SK-N-SH (cell line): ENCODE measurements at regions of chr7 and their contacts with region 1.

Region 1: GRCh38 chr7:101743241-101743994 is 74.0 kb upstream of the CUX1 start:
- DNase-seq: peak; percentile 94
- H3K4me3 ChIP-seq: peak overlapping the region; percentile 54 to 90
- H3K27ac ChIP-seq: no peak overlapping the region
- H3K4me1 ChIP-seq: no peaks in the 10 kb centered on the region; a peak in 1 of 4 replicates
- H3K27me3 ChIP-seq: no peaks in the 10 kb centered on the region; the same call in 1 of the 2 replicates
- CTCF ChIP-seq: peak; percentile 86
- EP300 ChIP-seq: no peak; a peak in 2 of 4 replicates
- RAD21 ChIP-seq: peak; percentile 37

Region 2: DNA sequence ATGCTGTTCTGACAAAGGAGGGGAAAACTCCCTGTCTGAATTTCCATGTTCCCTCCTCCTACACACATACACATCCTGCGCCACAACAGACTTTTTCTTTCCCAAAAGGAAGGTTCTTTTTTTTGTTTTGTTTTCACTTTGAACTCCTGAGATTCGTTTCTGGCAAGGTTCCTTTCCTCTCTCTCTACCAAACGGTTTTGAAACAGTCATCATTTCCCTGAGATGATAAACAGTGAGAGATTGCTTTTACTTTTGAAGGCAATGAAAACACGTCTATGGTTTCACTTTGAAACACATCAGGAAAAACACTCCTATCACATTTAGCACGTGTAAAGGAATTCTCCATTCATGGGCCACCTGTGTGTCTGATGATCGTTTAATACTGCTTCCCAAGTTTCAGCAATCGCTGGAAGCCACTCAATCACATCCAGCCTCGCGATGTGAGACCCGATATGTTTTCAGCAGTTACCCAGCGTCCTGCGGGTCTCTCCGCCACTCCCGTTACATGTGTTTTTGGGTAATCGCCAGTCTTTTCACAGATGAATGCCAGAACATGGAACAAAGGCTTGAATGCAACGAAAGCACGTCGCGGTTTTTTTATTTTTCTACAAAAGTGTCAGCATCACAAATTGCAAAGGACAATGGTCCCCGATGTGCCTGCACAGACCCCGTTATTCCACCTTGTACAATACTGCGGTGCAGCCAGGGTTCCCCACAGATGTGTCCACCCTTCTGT is 11.2 kb after region 1 on chr7:
- CTCF ChIA-PET with region 1: interaction called, 27 read pairs
- POLR2A ChIA-PET with region 1: no interaction called
- DNase-seq: peak; percentile 80
- H3K4me3 ChIP-seq: peak overlapping the region; percentile 43 to 58
- H3K27ac ChIP-seq: no peak overlapping the region
- H3K4me1 ChIP-seq: peaks cover 0 to 4% of the 10 kb centered on the region in 2 experiments; a peak in 1 of 4 replicates
- H3K27me3 ChIP-seq: peaks cover 4% of the 10 kb centered on the region; the same call in 1 of the 2 replicates
- CTCF ChIP-seq: no peak
- EP300 ChIP-seq: peak in 1 of 2 experiments; percentile 29; a peak in 1 of 4 replicates
- RAD21 ChIP-seq: no peak; the same call in 1 of the 2 replicates

Region 3: GRCh38 chr7:101804967-101805366 is 61.5 kb after region 1 on chr7:
- CTCF ChIA-PET with region 1: interaction called, 15 read pairs
- POLR2A ChIA-PET with region 1: no interaction called
- DNase-seq: no peak
- H3K4me3 ChIP-seq: no peak overlapping the region
- H3K27ac ChIP-seq: no peak overlapping the region
- H3K4me1 ChIP-seq: peaks cover 2 to 5% of the 10 kb centered on the region in 2 experiments; a peak in 1 of 4 replicates
- H3K27me3 ChIP-seq: peaks cover 31% of the 10 kb centered on the region
- CTCF ChIP-seq: peak; percentile 37; the same call in 1 of the 2 replicates
- EP300 ChIP-seq: no peak
- RAD21 ChIP-seq: no peak

Region 4: GRCh38 chr7:101862280-101863220 is 119.1 kb after region 1 on chr7:
- CTCF ChIA-PET with region 1: no interaction called
- POLR2A ChIA-PET with region 1: no interaction called
- DNase-seq: no peak
- H3K4me3 ChIP-seq: no peak overlapping the region
- H3K27ac ChIP-seq: no peak overlapping the region
- H3K4me1 ChIP-seq: peaks cover 7 to 8% of the 10 kb centered on the region in 2 experiments; a peak in 3 of 4 replicates
- H3K27me3 ChIP-seq: no peaks in the 10 kb centered on the region
- CTCF ChIP-seq: no peak
- EP300 ChIP-seq: no peak
- RAD21 ChIP-seq: no peak